GM12878 (cell line): ENCODE measurements at regions of chr5 and their contacts with region 1.

Region 1: DNA sequence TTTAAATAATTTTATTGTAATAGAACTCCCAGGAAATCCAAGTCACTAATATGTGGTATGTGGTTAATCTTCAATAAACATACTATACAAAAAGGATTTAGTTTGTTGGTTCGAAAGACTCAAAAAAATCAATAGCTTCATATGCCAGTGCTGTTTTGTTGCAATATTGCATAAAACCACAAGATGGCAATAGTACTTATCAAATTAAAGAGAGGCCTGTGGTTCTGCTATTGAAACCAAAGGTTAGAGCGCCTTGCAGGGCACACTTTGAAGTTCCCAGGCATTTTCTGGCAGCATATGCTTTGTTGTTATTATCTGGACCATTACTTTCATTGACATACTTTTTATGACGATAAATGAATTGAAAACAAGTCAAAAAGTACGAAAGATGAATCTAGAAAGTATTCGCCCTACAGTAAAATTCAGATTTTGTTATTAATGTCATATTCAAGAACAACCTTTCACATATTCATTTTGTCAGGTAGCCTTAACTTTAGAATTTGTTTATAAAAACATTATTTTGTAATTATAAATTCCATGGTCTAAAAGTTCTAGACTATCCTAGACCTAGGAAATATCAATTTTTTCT is 316.3 kb downstream of the MCTP1 start:
- DNase-seq: peak; percentile 26
- ATAC-seq: peak; percentile 78
- H3K4me3 ChIP-seq: no peak overlapping the region
- H3K27ac ChIP-seq: no peak overlapping the region
- H3K4me1 ChIP-seq: no peaks in the 10 kb centered on the region
- H3K27me3 ChIP-seq: no peaks in the 10 kb centered on the region
- CTCF ChIP-seq: peak; percentile 38 to 60 (median 55); a peak in 5 of 6 replicates
- EP300 ChIP-seq: no peak
- POLR2A ChIP-seq: no peak
- RAD21 ChIP-seq: peak; percentile 86

Region 2: GRCh38 chr5:94815313-94816039 is 153.1 kb before region 1 on chr5:
- CTCF ChIA-PET with region 1: no interaction called
- POLR2A ChIA-PET with region 1: no interaction called
- RAD21 ChIA-PET with region 1: no interaction called
- SMC1A ChIA-PET with region 1: no interaction called
- in situ Hi-C with region 1: no loop called
- intact Hi-C with region 1: no loop called
- DNase-seq: no peak
- ATAC-seq: no peak
- H3K4me3 ChIP-seq: no peak overlapping the region
- H3K27ac ChIP-seq: no peak overlapping the region
- H3K4me1 ChIP-seq: no peaks in the 10 kb centered on the region
- H3K27me3 ChIP-seq: no peaks in the 10 kb centered on the region
- CTCF ChIP-seq: no peak
- EP300 ChIP-seq: no peak
- POLR2A ChIP-seq: no peak
- RAD21 ChIP-seq: no peak

Region 3: GRCh38 chr5:94908889-94909480 is 59.6 kb before region 1 on chr5:
- CTCF ChIA-PET with region 1: no interaction called
- POLR2A ChIA-PET with region 1: no interaction called
- RAD21 ChIA-PET with region 1: no interaction called
- SMC1A ChIA-PET with region 1: no interaction called
- in situ Hi-C with region 1: no loop called
- intact Hi-C with region 1: no loop called
- DNase-seq: no peak
- ATAC-seq: peak; percentile 84
- H3K4me3 ChIP-seq: no peak overlapping the region
- H3K27ac ChIP-seq: no peak overlapping the region
- H3K4me1 ChIP-seq: no peaks in the 10 kb centered on the region
- H3K27me3 ChIP-seq: no peaks in the 10 kb centered on the region
- CTCF ChIP-seq: peak; percentile 53 to 58 (median 57)
- EP300 ChIP-seq: no peak
- POLR2A ChIP-seq: no peak
- RAD21 ChIP-seq: peak; percentile 73

Region 4: GRCh38 chr5:94983861-94984535 is 15.4 kb after region 1 on chr5:
- CTCF ChIA-PET with region 1: interaction called, 5 read pairs
- POLR2A ChIA-PET with region 1: no interaction called
- RAD21 ChIA-PET with region 1: no interaction called
- SMC1A ChIA-PET with region 1: interaction called, 10 read pairs
- in situ Hi-C with region 1: no loop called
- intact Hi-C with region 1: no loop called
- DNase-seq: no peak
- ATAC-seq: no peak
- H3K4me3 ChIP-seq: no peak overlapping the region
- H3K27ac ChIP-seq: no peak overlapping the region
- H3K4me1 ChIP-seq: no peaks in the 10 kb centered on the region
- H3K27me3 ChIP-seq: no peaks in the 10 kb centered on the region
- CTCF ChIP-seq: no peak
- EP300 ChIP-seq: no peak
- POLR2A ChIP-seq: no peak
- RAD21 ChIP-seq: no peak

Region 5: GRCh38 chr5:95069948-95070347 is 101.3 kb after region 1 on chr5:
- CTCF ChIA-PET with region 1: interaction called, 24 read pairs
- POLR2A ChIA-PET with region 1: no interaction called
- RAD21 ChIA-PET with region 1: interaction called, 20 read pairs
- SMC1A ChIA-PET with region 1: interaction called, 13 read pairs
- in situ Hi-C with region 1: no loop called
- intact Hi-C with region 1: no loop called
- DNase-seq: no peak
- ATAC-seq: peak; percentile 42
- H3K4me3 ChIP-seq: no peak overlapping the region; the same call in 1 of the 2 replicates
- H3K27ac ChIP-seq: peak overlapping the region; percentile 30; the same call in 1 of the 2 replicates
- H3K4me1 ChIP-seq: peaks cover 44% of the 10 kb centered on the region
- H3K27me3 ChIP-seq: no peaks in the 10 kb centered on the region
- CTCF ChIP-seq: no peak
- EP300 ChIP-seq: no peak
- POLR2A ChIP-seq: no peak
- RAD21 ChIP-seq: no peak

Region 6: DNA sequence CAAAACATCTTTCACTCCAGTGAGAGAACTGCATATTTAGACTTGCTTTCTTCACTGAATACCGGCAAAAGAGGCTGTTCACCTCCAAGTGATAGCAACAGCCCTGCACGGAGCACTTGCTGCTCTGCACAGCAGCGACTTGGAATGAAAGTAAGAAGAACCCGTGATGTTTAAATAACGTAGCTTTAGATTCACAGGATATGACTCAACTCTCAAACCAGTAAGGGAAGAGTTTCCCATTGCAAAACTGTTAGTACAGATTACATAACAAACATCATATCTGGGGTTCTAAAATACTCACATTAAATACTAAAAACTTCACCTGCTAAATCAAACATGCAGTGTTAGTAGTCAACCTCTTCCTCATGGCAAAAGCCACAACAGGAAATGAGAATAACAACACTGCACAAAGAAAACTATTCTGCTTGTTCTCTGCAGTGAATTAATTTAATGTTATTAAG is 112.9 kb after region 1 on chr5:
- CTCF ChIA-PET with region 1: interaction called, 24 read pairs
- POLR2A ChIA-PET with region 1: no interaction called
- RAD21 ChIA-PET with region 1: interaction called, 20 read pairs
- SMC1A ChIA-PET with region 1: interaction called, 13 read pairs
- in situ Hi-C with region 1: no loop called
- intact Hi-C with region 1: loop called (anchors 2 kb)
- DNase-seq: peak; percentile 89
- ATAC-seq: peak; percentile 85
- H3K4me3 ChIP-seq: peak overlapping the region; percentile 37
- H3K27ac ChIP-seq: peak overlapping the region; percentile 66
- H3K4me1 ChIP-seq: no peaks in the 10 kb centered on the region
- H3K27me3 ChIP-seq: no peaks in the 10 kb centered on the region
- CTCF ChIP-seq: no peak
- EP300 ChIP-seq: peak; percentile 26 to 55; a peak in 2 of 4 replicates
- POLR2A ChIP-seq: peak; percentile 85
- RAD21 ChIP-seq: no peak

Region 7: GRCh38 chr5:95110118-95110517 is 141.5 kb after region 1 on chr5:
- CTCF ChIA-PET with region 1: interaction called, 15 read pairs
- POLR2A ChIA-PET with region 1: no interaction called
- RAD21 ChIA-PET with region 1: interaction called, 13 read pairs
- SMC1A ChIA-PET with region 1: interaction called, 19 read pairs
- in situ Hi-C with region 1: no loop called
- intact Hi-C with region 1: no loop called
- DNase-seq: no peak
- ATAC-seq: peak; percentile 78
- H3K4me3 ChIP-seq: no peak overlapping the region
- H3K27ac ChIP-seq: no peak overlapping the region
- H3K4me1 ChIP-seq: no peaks in the 10 kb centered on the region
- H3K27me3 ChIP-seq: no peaks in the 10 kb centered on the region
- CTCF ChIP-seq: peak in 1 of 3 experiments; percentile 18; a peak in 2 of 6 replicates
- EP300 ChIP-seq: no peak
- POLR2A ChIP-seq: no peak
- RAD21 ChIP-seq: no peak

Region 8: GRCh38 chr5:95223566-95224258 is 255.1 kb after region 1 on chr5:
- CTCF ChIA-PET with region 1: interaction called, 9 read pairs
- POLR2A ChIA-PET with region 1: interaction called, 4 read pairs
- RAD21 ChIA-PET with region 1: interaction called, 3 read pairs
- SMC1A ChIA-PET with region 1: interaction called, 14 read pairs
- in situ Hi-C with region 1: no loop called
- intact Hi-C with region 1: no loop called
- DNase-seq: no peak
- ATAC-seq: no peak
- H3K4me3 ChIP-seq: no peak overlapping the region
- H3K27ac ChIP-seq: no peak overlapping the region
- H3K4me1 ChIP-seq: no peaks in the 10 kb centered on the region
- H3K27me3 ChIP-seq: no peaks in the 10 kb centered on the region
- CTCF ChIP-seq: no peak
- EP300 ChIP-seq: no peak
- POLR2A ChIP-seq: no peak
- RAD21 ChIP-seq: no peak

Region 9: GRCh38 chr5:95261437-95262175 is 293.0 kb after region 1 on chr5:
- CTCF ChIA-PET with region 1: interaction called, 57 read pairs
- POLR2A ChIA-PET with region 1: no interaction called
- RAD21 ChIA-PET with region 1: interaction called, 29 read pairs
- SMC1A ChIA-PET with region 1: interaction called, 39 read pairs
- in situ Hi-C with region 1: loop called (anchors 5 kb)
- intact Hi-C with region 1: loop called (anchors 1 kb)
- DNase-seq: no peak
- ATAC-seq: peak; percentile 78
- H3K4me3 ChIP-seq: no peak overlapping the region
- H3K27ac ChIP-seq: no peak overlapping the region
- H3K4me1 ChIP-seq: no peaks in the 10 kb centered on the region; the same call in 1 of the 2 replicates
- H3K27me3 ChIP-seq: peaks cover 0 to 2% of the 10 kb centered on the region in 2 experiments; a peak in 2 of 4 replicates
- CTCF ChIP-seq: peak; percentile 52 to 64 (median 53)
- EP300 ChIP-seq: no peak
- POLR2A ChIP-seq: no peak
- RAD21 ChIP-seq: peak; percentile 70